Activated T-helper 2 cell treated with anti-CD3 and anti-CD28 coated beads, Interferon-gamma antibody, Interleukin-2, Interleukin-4, amounts not matched to agents 10 μg/mL and 5 μg/mL and 100 μg/mL, durations not matched to agents 14 hours and 24 hours and 36 hours (primary cell): ENCODE measurements at regions of chr1 and their contacts with region 1.

Region 1: DNA sequence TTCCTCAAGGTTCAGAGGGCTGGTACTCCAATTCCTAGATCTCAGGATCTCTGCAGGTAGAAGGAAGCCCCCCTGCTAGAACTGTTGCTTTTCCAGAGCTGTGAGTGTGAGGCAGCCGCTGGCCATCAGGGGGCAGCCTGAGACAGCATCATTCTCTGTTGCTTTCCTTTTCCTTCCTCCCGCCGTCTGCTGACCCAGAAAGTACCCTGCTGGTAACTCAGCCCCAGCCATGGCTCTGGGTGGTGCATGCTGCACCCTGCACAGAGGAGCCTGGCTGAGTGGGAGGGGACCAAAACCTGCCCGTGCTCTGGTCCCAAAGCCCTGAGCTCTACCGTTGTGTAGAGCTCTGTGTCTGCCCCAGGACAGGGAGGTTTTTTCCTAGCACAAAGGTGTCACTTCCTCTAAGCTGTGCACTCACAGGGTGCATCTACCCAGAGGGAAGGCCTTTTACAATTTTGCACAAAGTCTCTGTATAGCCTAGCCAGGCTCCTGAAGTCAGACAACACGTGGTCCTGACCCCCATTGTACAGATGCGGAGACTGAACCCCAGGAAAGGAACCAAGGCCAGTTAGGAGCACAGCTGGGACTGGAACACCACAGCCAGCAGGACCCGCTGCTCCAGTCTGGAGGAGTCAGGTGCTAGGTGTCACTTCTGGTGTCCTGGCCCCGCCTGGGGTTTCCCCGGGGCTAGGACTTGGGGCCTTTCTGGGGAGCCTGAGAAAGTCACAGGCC is 5.6 kb upstream of the FAM131C start:
- DNase-seq: peak; percentile 63
- H3K4me3 Mint-ChIP-seq: peak overlapping the region; percentile 47
- H3K27ac Mint-ChIP-seq: no peak overlapping the region
- H3K4me1 Mint-ChIP-seq: peaks cover 10% of the 10 kb centered on the region
- H3K27me3 Mint-ChIP-seq: peaks cover 6% of the 10 kb centered on the region

Region 2: GRCh38 chr1:15559294-15559761 is 519.8 kb before region 1 on chr1:
- intact Hi-C with region 1: no loop called
- DNase-seq: no peak
- H3K4me3 Mint-ChIP-seq: no peak overlapping the region
- H3K27ac Mint-ChIP-seq: no peak overlapping the region
- H3K4me1 Mint-ChIP-seq: peaks cover 3% of the 10 kb centered on the region
- H3K27me3 Mint-ChIP-seq: no peaks in the 10 kb centered on the region

Region 3: DNA sequence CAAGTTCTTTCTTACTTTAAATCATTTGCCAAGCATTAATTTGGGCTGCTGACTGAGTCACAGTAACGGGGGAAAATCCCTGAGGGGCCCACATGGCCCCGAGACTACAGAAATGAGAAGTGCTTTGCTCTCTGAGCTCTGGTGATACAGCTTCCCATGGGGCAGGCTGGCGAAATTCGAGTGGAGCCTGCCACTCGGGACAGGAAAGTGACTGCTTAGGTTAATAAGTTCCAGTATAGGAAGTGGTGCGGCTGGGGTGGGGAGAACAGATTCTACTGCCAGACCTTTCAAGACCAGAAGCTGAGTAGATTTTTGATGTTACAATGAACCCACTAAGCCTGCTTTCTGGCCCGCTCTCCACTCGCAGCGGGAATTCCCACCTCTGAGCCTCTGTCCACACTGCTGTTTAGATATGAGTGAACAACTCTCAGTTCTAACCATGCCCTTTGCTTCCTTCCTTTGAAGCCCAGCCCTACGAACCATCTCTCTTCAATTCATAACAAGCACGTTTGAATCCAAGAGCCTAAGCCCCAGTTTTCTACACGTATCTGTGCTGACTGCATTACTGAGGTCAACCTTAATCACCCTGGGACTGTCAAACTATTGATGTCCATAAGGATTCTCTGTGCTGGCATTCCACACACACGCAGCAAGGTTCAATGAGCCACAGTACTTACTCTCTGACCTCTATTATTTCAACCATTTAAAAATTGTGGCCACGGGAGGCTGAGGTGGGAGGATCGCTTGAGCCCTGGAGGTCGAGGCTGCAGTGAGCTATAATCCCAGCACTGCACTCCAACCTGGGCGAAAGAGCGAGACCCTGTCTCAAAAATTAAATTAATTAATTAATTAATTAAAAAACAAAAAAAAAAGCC is 112.8 kb before region 1 on chr1:
- intact Hi-C with region 1: no loop called
- DNase-seq: peak; percentile 59
- H3K4me3 Mint-ChIP-seq: peak overlapping the region; percentile 77
- H3K27ac Mint-ChIP-seq: peak overlapping the region; percentile 99
- H3K4me1 Mint-ChIP-seq: peaks cover 63% of the 10 kb centered on the region
- H3K27me3 Mint-ChIP-seq: no peaks in the 10 kb centered on the region

Region 4: DNA sequence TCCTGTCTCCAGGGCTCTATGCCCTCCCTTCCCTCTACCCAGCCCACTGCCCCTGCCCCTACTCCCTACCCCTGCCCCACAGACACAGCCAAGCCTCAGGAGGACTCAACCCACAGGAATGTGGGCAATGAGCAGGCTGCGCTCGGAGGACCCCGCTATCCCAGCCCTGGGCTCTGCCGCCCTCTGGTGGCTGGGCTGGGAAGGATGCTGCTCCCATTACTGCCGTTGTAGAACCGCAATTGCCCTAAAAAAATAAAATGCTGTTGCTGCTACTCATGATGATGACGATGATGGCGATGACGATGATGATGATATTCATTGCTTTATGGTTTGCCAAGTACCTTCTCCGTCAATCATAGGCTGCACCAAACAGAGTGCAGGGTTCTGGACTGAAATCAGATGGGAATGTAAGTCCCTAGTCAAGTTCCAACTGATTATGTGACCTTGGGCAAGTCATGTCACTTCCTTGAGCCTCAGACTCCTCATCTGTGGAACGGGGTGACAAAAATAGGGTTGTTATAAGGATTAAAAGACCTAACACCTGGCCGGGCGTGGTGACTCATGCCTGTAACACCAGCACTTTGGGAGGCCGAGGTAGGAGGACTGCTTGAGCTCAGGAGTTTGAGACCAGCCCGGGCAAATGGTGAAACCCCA is 108.8 kb after region 1 on chr1:
- intact Hi-C with region 1: loop called (anchors 1 kb)
- DNase-seq: peak; percentile 61
- H3K4me3 Mint-ChIP-seq: no peak overlapping the region
- H3K27ac Mint-ChIP-seq: no peak overlapping the region
- H3K4me1 Mint-ChIP-seq: peaks cover 4% of the 10 kb centered on the region
- H3K27me3 Mint-ChIP-seq: peaks cover 15% of the 10 kb centered on the region

Region 5: GRCh38 chr1:16243936-16244649 is 165.0 kb after region 1 on chr1:
- intact Hi-C with region 1: loop called (anchors 2 kb)
- DNase-seq: peak; percentile 60
- H3K4me3 Mint-ChIP-seq: no peak overlapping the region
- H3K27ac Mint-ChIP-seq: no peak overlapping the region
- H3K4me1 Mint-ChIP-seq: peaks cover 5% of the 10 kb centered on the region
- H3K27me3 Mint-ChIP-seq: no peaks in the 10 kb centered on the region